ENCODE measurements at regions of chr18 and their contacts with region 1.

Region 1: DNA sequence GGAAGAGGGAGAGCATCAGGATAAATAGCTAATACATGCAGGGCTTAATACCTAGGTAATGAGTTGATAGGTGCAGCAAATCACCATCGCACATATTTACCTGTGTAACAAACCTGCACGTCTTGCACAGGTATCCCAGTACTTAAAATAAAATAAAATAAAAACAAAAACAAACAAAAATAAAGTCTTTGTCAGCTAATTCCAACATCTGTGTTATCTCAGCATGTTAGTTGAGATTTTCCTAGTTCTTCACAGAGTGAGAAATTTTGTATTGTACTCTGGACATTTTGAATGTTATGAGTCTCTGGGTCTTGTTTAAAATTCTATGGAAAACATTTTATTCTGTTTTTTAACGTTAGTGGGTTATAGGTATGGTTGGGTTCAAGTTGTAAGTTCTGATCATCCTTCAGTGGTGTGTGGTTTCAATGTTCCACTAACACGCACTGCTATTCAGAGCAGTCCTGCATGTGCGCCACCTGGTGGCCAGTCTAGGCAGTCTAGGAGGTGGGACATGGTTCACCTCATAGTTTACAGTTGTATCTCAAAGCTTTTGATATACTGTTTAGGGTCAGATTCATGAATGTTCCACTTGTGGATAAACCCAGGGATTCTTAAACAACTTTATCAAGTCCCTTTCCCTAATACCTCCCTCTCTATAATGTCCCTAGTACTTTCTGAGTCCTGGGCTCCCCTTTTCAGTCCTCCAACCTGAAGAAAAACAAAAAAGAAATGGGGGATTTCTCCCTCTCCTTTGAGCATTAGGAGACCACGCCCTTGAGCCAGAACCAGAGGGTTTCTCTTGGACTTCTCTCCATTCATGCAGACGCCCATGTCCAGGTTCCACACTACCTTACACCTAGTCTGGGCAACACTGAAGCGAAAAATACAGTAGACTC is 213.4 kb upstream of the GATA6 start:
- DNase-seq: peak; percentile 69
- ATAC-seq: peak; percentile 78
- H3K4me3 Mint-ChIP-seq: no peak overlapping the region
- H3K27ac Mint-ChIP-seq: no peak overlapping the region
- H3K4me1 Mint-ChIP-seq: no peaks in the 10 kb centered on the region
- H3K27me3 Mint-ChIP-seq: peaks cover 15% of the 10 kb centered on the region
- CTCF ChIP-seq: peak; percentile 47

Region 2: GRCh38 chr18:21194871-21195771 is 760.9 kb before region 1 on chr18:
- CTCF ChIA-PET with region 1: interaction called, 52 read pairs
- POLR2A ChIA-PET with region 1: no interaction called
- intact Hi-C with region 1: loop called (anchors 1 kb)
- DNase-seq: no peak
- ATAC-seq: peak; percentile 28
- H3K4me3 Mint-ChIP-seq: no peak overlapping the region
- H3K27ac Mint-ChIP-seq: no peak overlapping the region
- H3K4me1 Mint-ChIP-seq: no peaks in the 10 kb centered on the region
- H3K27me3 Mint-ChIP-seq: peaks cover 8% of the 10 kb centered on the region
- CTCF ChIP-seq: peak; percentile 37

Region 3: GRCh38 chr18:21489119-21489750 is 466.8 kb before region 1 on chr18:
- CTCF ChIA-PET with region 1: interaction called, 9 read pairs
- POLR2A ChIA-PET with region 1: no interaction called
- intact Hi-C with region 1: loop called (anchors 1 kb)
- DNase-seq: no peak
- ATAC-seq: no peak
- H3K4me3 Mint-ChIP-seq: no peak overlapping the region
- H3K27ac Mint-ChIP-seq: no peak overlapping the region
- H3K4me1 Mint-ChIP-seq: no peaks in the 10 kb centered on the region
- H3K27me3 Mint-ChIP-seq: peaks cover 9% of the 10 kb centered on the region
- CTCF ChIP-seq: no peak

Region 4: DNA sequence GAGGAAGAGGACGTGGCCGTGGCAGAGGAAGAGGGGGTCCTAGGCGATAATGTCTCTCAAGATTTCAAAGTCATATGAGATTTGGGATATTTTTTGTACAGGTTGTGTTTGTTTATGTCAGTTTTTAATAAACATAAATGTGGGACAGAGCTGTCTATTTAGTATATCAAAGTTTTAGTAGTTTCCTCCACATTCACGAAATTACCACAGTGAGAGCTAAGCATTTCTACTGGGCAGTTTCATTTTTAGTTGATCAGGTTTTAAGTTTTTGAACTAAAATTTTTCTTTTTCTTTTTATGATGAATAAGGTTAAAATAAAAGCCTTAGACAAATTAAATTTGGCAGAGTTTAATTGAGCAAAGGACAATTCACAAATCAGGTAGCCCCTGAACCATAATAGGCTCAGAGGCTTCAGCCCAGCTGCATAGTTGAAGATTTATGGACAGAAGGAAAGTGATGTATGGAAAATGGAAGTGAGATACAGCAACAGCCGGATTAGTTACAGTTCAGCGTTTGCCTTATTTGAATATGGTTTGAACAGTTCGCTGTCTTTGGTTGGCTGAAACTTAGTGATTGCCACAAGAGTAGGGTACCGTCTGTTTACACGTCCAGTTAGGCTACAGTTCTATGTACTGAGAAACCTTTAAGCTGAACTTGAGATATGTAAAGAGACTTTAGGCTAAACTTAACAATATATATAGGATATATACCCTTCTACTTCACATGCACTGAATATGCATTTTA is 326.7 kb before region 1 on chr18:
- CTCF ChIA-PET with region 1: no interaction called
- POLR2A ChIA-PET with region 1: no interaction called
- intact Hi-C with region 1: loop called (anchors 2 kb)
- DNase-seq: no peak
- ATAC-seq: peak; percentile 84
- H3K4me3 Mint-ChIP-seq: peak overlapping the region; percentile 1
- H3K27ac Mint-ChIP-seq: peak overlapping the region; percentile 51
- H3K4me1 Mint-ChIP-seq: peaks cover 22% of the 10 kb centered on the region
- H3K27me3 Mint-ChIP-seq: no peaks in the 10 kb centered on the region
- CTCF ChIP-seq: no peak

Region 5: DNA sequence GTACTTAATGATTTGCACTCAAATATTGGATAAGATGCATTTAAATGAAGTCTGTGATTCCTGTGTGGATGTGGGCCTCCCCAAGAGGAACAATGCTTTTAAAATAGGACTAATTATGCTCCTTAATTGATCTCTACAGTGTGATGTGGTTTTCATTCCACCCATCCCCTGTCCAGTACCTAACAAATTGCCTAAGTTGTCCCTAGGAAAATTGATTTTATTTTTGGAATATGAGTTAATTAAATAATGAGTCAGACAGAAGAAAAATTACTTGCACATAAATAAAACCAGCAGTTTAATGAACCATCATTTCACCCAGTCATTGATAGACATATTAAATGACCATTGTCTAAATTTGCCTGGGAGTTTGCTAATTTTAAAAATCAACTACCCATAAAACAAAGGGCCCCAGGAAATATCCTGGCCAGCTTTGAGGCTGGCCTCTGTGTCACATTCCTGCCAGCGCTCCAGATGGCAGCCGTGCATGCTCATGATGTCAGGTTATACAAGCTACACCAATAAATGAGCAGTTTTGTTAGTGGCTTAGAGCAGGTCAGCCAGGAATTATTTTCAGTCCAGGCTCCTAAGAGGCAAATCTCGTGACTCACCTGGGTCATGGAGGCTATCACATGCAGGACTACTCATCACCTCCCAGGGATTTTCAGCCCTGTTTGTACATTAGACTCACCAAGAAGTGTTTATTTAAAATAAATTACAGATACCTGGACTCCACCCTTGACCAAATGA is 283.3 kb before region 1 on chr18:
- CTCF ChIA-PET with region 1: no interaction called
- POLR2A ChIA-PET with region 1: no interaction called
- intact Hi-C with region 1: no loop called
- DNase-seq: no peak
- ATAC-seq: no peak
- H3K4me3 Mint-ChIP-seq: no peak overlapping the region
- H3K27ac Mint-ChIP-seq: no peak overlapping the region
- H3K4me1 Mint-ChIP-seq: no peaks in the 10 kb centered on the region
- H3K27me3 Mint-ChIP-seq: no peaks in the 10 kb centered on the region
- CTCF ChIP-seq: no peak

Region 6: DNA sequence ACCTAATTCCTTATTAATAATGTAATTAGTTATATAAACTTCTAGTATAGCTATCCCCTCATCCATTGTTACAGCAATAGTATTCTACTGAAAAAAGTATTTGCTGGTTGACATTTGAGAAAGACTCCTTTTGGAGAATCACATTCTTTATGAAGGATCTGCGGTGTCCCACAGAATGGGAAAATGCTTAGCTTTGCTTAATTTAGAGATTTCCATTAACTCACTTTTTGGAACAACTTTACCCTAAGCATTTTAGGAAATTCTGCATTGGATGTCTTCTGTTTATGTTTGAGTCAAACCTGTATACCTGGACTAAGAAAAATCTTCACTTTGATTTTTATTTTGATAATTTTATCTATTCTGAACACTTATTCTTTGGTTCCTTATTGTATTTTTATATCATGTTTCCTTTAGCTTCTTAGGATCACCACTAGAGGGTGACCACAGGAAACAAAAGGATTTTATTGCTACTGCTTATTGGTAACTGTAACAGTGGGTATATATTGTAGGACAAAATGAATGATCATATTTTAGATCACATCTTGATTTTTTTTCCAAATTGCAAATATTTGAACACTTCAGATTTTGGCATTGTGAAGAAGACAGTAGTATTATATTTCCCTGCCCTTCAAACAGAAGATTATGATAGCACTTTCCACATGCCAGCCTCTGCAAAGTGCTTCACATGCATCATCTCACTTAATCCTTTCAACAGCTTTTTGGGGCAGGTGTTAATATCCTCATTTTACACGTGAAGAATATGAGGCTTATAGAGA is 135.8 kb before region 1 on chr18:
- CTCF ChIA-PET with region 1: interaction called, 16 read pairs
- POLR2A ChIA-PET with region 1: no interaction called
- intact Hi-C with region 1: loop called (anchors 1 kb)
- DNase-seq: no peak
- ATAC-seq: no peak
- H3K4me3 Mint-ChIP-seq: no peak overlapping the region
- H3K27ac Mint-ChIP-seq: no peak overlapping the region
- H3K4me1 Mint-ChIP-seq: no peaks in the 10 kb centered on the region
- H3K27me3 Mint-ChIP-seq: no peaks in the 10 kb centered on the region
- CTCF ChIP-seq: no peak

Region 7: GRCh38 chr18:21897811-21898210 is 58.2 kb before region 1 on chr18:
- CTCF ChIA-PET with region 1: interaction called, 3 read pairs
- POLR2A ChIA-PET with region 1: no interaction called
- intact Hi-C with region 1: loop called (anchors 1 kb)
- DNase-seq: no peak
- ATAC-seq: no peak
- H3K4me3 Mint-ChIP-seq: no peak overlapping the region
- H3K27ac Mint-ChIP-seq: no peak overlapping the region
- H3K4me1 Mint-ChIP-seq: peaks cover 4% of the 10 kb centered on the region
- H3K27me3 Mint-ChIP-seq: peaks cover 17% of the 10 kb centered on the region
- CTCF ChIP-seq: peak; percentile 35

Region 8: DNA sequence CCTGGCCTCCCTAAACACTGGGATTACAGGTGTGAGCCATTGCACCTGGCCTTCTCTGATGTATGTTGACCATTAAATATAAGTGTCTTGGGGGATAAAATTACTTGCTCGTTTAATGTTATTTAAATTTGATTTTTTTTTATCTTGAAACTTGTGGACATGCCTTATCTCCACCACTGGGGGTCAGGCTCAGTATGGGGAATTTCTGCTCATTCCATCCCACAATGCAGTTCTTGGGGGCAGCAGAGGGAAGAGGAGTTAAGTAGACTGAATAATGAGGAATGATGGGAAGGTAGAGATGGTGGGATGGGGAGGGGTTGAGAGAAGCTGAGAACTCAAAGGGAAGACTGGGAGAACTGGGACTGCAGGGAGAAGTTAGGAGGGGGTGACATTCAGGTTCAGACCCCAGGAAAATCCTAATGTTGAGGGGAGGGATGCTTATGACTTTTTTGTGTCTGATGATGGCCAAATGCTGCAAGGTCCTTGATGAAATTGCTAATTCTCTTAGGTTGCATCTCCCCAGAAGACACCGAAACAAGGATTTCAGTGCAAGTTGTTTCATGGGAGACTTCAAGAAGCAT is 41.2 kb before region 1 on chr18:
- CTCF ChIA-PET with region 1: no interaction called
- POLR2A ChIA-PET with region 1: no interaction called
- intact Hi-C with region 1: loop called (anchors 1 kb)
- DNase-seq: no peak
- ATAC-seq: no peak
- H3K4me3 Mint-ChIP-seq: no peak overlapping the region
- H3K27ac Mint-ChIP-seq: no peak overlapping the region
- H3K4me1 Mint-ChIP-seq: no peaks in the 10 kb centered on the region
- H3K27me3 Mint-ChIP-seq: peaks cover 7% of the 10 kb centered on the region
- CTCF ChIP-seq: no peak

Region 9: DNA sequence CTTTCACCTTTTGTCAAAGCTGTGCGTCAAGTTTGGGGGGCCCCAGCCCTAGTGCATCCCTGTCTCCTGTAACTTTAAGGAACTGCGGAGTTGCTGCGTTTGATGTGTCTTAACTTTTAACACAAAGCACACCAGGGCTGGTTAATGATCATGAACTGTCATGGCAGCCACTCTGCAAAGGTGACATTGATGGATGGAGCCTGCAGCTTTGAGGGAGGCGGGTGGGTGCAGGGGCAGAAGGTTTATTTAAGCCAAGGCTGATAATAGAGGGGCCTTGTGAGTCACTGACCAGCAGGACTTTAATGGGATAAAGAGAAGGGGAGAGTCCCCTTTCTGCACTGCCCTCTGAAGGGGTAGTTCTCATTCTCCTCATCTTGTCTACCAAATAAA is 23.2 kb after region 1 on chr18:
- CTCF ChIA-PET with region 1: no interaction called
- POLR2A ChIA-PET with region 1: no interaction called
- intact Hi-C with region 1: no loop called
- DNase-seq: no peak
- ATAC-seq: no peak
- H3K4me3 Mint-ChIP-seq: no peak overlapping the region
- H3K27ac Mint-ChIP-seq: no peak overlapping the region
- H3K4me1 Mint-ChIP-seq: no peaks in the 10 kb centered on the region
- H3K27me3 Mint-ChIP-seq: no peaks in the 10 kb centered on the region
- CTCF ChIP-seq: no peak

Region 10: DNA sequence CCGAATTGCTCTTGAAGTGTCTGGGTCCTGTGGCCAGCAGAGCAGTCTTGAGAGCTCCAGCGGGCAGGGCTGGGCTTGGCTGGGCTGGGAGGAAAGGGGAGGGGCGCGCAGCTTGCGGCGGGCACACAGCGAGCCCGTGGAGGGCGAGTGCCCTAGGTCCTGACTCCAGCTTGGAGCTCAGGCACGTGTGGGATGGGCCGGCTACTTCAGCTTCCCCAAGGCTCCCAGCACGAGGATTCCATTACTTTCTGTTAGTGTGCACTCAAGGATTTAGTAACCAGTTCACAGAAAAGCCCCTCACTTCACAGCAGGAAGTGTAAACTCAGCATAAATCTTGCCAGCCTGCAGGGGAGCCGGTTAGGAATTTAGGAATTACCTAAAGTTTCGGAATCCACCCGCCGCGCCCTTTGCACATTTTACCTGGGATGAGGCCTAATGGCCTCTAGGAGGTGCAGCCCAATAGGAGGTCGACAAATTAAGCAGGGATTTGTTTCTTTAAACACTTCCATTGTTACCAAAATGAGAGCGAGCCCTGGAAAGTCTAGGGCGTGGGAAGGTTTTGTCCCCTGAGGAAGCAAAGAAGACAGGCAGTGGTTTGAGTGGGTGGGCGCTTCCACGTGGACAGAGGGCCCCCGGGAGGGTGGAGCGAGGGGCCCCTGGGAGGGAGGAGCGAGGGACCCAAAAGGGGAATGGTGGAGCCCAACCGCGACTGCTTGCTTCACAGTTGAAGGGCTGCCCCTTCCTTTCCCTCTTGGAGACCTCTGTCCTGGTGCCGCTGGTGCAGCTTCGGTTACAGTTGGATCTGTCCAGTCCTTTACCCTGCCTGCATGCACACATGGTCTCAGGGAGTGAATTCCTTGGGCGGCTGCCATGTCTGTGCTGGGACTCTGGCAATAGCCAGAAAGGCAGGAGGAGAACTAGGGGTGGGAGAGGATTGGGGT is 368.5 kb after region 1 on chr18:
- CTCF ChIA-PET with region 1: no interaction called
- POLR2A ChIA-PET with region 1: no interaction called
- intact Hi-C with region 1: no loop called
- DNase-seq: no peak
- ATAC-seq: no peak
- H3K4me3 Mint-ChIP-seq: peak overlapping the region; percentile 17
- H3K27ac Mint-ChIP-seq: no peak overlapping the region
- H3K4me1 Mint-ChIP-seq: no peaks in the 10 kb centered on the region
- H3K27me3 Mint-ChIP-seq: peaks cover 3% of the 10 kb centered on the region
- CTCF ChIP-seq: no peak

Measured in activated B cell treated with CpG ODN at 0.5 μM for 24 hours (primary cell).